GM18951 (cell line): ENCODE measurements at regions of chr11 and their contacts with region 1.

Region 1: DNA sequence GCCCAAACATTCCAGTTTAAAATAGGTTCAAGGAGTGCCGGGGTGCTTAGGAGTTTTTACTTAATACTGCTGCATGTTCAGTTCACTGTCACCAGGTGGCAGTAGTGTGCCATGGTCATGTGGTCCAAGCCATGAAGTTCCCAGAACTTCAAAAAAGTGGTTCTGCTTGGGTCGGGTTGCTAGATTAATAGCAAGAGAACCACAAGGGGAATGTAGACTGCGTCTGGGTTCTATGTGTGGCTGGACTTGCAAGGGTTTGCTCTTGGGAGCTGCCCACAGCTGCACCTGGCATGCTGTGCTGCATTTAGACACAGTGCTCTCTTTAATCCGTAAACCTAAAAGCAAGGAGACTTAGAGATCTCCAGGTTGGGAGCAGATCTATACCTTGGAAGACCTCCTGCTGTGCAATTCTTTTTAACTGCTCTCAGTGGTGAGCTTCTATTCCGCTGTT is 6.5 kb upstream of the SPON1 start:
- POLR2A ChIP-seq: no peak

Region 2: DNA sequence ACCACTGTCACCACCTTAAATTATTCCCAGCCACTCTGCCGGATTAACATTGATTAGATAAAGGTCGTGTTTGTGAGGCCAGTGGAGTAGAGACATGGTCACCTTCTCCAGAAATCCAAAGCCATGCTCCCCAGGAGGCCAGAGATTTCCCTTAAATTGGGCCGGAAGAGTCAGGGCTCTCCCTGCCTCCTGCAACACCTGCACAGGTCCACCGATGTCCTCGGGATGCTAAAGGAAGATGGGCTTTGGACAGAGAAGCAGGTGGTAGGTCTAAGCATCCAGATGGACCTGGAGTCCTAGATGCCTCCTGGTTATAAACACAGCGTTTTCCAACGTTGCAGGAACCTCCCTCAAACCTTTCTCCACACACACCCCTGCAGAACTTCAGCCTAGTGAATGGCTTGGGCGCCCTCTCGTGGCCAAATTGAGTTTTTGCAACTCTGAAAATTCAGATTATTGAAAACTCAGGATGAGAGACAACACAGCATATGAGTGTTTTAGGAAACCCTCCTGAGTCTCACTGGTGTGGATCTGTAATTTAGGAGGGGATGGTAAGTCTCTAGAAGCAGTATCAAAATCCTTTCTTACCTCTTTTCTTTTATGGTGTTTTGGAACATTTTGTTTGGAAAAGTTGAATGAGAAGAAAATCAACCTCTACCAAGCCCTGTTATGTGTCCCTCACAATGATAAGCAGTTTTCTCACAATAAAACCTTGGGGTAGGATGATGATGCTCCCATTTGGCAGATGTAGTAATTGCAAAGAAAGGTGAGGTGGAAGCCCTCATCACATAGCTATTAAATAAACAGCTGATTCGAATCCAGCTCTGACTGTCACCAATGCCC is 293.3 kb after region 1 on chr11:
- in situ Hi-C with region 1: loop called (anchors 5 kb)
- POLR2A ChIP-seq: no peak

Region 3: DNA sequence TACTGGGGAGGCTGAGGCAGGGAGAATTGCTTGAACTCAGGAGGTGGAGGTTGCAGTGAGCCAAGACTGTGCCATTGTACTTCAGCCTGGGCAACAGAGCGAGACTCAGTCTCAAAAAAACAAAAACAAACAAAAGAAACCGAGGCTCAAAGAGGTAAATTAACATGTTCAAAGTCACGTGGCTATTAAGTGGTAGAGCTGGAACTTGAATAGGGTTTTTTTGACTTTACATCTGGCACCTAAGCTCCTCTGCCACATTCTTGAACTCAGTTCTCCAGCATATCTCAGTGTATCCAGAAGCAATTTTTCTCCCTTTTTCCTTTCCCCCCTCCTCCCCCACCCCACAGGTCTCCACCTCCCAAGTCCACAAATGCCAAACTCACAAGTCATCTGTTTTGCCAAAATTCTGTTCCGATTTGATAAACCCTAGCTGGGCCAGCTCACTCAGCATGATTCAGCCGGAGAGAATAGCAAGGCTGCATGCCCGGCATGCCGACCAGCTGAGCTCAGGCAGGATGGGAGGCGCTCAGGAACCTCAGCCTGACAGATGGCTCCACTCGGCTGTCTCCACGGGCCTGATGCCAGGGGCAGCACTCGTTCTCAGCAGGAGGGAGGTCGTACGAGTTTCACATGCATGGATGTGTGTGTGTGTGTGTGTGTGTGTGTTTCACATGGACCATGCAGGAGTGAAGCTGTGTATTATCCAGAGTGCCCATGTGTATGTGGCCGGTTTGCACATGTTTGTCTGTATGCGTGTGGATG is 466.2 kb after region 1 on chr11:
- in situ Hi-C with region 1: loop called (anchors 25 kb)
- POLR2A ChIP-seq: no peak